Psoas muscle (tissue), 8 donors: ENCODE measurements at regions of chr6 and their contacts with region 1.

Region 1: DNA sequence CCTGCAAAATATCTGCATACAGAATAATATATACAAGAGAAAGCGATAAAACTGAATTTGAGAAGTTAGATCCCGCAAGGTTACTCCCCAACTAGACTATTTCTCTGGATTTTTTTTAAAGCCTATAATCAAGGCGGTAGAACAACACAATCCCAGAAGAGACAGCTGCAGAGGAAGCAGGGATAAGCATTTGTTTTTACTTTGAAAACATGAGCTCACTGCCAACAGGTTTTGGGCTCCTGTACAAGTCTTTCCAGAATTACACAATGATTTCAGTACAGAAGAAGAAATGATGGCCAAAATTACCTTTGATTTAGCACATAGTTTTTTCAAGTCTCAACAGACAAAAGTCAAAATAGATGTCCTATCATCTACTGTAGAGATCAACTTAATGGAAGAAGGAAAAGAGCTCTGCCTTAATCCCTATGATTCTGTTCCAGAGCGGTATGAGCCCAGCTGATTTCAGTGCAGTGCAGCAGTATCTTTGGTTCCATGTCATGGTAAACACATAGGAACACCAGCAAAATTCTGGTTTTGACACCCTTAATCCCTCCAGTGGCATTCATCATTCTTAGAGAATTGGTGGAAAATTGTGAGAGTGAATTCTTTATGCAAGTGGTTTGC is 304.3 kb downstream of the HDGFL1 start:
- DNase-seq: no peak
- ATAC-seq: peak in 3 of 4 donors; percentile 63 to 79 (median 77)
- H3K4me3 ChIP-seq: no peak overlapping the region
- H3K27ac ChIP-seq: peak overlapping the region; percentile 63
- H3K4me1 ChIP-seq: peaks cover 10% of the 10 kb centered on the region
- H3K27me3 ChIP-seq: no peaks in the 10 kb centered on the region
- CTCF ChIP-seq: no peak

Region 2: DNA sequence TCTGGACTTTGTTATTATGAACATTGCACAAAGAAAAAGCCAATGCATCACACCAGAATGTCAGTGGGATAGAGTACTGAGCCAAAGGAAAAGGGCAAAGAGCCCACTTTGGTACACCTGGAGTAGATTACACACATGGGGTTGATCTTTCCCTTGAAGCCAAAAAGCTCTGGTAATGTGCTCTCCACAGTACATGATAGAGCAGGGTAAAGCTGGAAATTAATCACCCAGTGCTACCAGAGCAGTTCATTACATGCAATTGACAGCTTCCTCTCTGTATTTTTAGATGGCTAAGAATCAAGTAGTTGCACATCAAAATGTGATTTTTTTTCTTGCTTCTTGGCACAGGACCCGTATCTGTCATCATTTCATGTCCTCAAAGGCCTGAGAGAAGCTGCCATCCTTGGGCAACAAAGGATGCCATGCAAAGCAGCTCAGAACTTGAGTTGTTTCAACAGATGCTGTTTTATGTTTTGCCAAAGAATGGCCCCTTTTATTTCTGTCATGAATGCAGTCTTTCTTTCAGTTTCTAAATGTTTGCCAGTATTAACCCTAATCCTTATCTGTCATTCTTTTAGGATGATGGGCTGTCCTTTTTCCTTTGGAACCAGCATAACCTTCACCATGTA is 216.2 kb before region 1 on chr6:
- intact Hi-C with region 1: no loop called
- DNase-seq: no peak
- ATAC-seq: no peak
- H3K4me3 ChIP-seq: no peak overlapping the region
- H3K27ac ChIP-seq: no peak overlapping the region
- H3K4me1 ChIP-seq: peaks cover 11% of the 10 kb centered on the region
- H3K27me3 ChIP-seq: no peaks in the 10 kb centered on the region
- CTCF ChIP-seq: no peak

Region 3: GRCh38 chr6:22828179-22829062 is 45.2 kb before region 1 on chr6:
- intact Hi-C with region 1: loop called in 1 of 2 experiments (anchors 2 kb)
- DNase-seq: no peak
- ATAC-seq: peak in 3 of 4 donors; percentile 64 to 70 (median 68)
- H3K4me3 ChIP-seq: peak overlapping the region; percentile 27
- H3K27ac ChIP-seq: peak overlapping the region; percentile 40
- H3K4me1 ChIP-seq: peaks cover 14% of the 10 kb centered on the region
- H3K27me3 ChIP-seq: no peaks in the 10 kb centered on the region
- CTCF ChIP-seq: peak; percentile 53

Region 4: DNA sequence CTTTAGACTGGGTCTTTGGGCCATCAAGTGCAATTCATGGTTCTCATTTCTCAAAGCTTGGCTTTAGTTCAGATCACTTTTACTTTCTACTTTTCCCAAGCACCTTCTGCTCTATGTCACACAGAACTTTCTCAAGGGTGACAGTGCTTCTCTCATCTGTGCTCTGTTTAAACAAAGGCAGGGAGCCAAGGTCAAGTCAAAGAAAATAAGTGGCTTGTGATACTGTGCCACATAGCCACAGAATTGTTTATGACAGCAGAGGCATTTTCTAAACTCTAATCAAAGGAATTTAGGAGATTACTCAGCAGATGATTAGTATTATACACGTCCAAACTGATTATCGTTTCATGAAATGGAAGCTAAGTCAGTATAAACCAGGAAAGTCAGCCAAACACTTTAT is 43.7 kb after region 1 on chr6:
- intact Hi-C with region 1: no loop called
- DNase-seq: no peak
- ATAC-seq: no peak
- H3K4me3 ChIP-seq: no peak overlapping the region
- H3K27ac ChIP-seq: no peak overlapping the region
- H3K4me1 ChIP-seq: no peaks in the 10 kb centered on the region
- H3K27me3 ChIP-seq: no peaks in the 10 kb centered on the region
- CTCF ChIP-seq: no peak